ENCODE measurements at regions of chr5 and their contacts with region 1.

Region 1: GRCh38 chr5:119411935-119412602 is 40.2 kb upstream of the HSD17B4 start:
- DNase-seq: peak; percentile 77
- H3K4me3 Mint-ChIP-seq: peak overlapping the region; percentile 72
- H3K27ac Mint-ChIP-seq: peak overlapping the region; percentile 77
- H3K4me1 Mint-ChIP-seq: peaks cover 36% of the 10 kb centered on the region
- H3K27me3 Mint-ChIP-seq: no peaks in the 10 kb centered on the region

Region 2: GRCh38 chr5:118987988-118988865 is 423.8 kb before region 1 on chr5 and contains the start of gene DTWD2:
- CTCF ChIA-PET with region 1: interaction called, 83 read pairs
- intact Hi-C with region 1: loop called (anchors 1 kb)
- DNase-seq: peak; percentile 92
- H3K4me3 Mint-ChIP-seq: peak within 1 kb of the TSS; percentile 76
- H3K27ac Mint-ChIP-seq: peak within 1 kb of the TSS; percentile 63
- H3K4me1 Mint-ChIP-seq: peaks cover 22% of the 10 kb centered on the region
- H3K27me3 Mint-ChIP-seq: no peaks in the 10 kb centered on the region
- total RNA-seq, gene DTWD2: 4.0 to 5.5 TPM

Region 3: GRCh38 chr5:119070828-119071572 is 341.1 kb before region 1 on chr5 and contains the start of gene DMXL1:
- CTCF ChIA-PET with region 1: interaction called, 7 read pairs
- intact Hi-C with region 1: loop called (anchors 2 kb)
- DNase-seq: peak; percentile 100
- H3K4me3 Mint-ChIP-seq: peak within 1 kb of the TSS; percentile 95
- H3K27ac Mint-ChIP-seq: peak within 1 kb of the TSS; percentile 97
- H3K4me1 Mint-ChIP-seq: peaks cover 38% of the 10 kb centered on the region
- H3K27me3 Mint-ChIP-seq: peaks cover 2% of the 10 kb centered on the region
- total RNA-seq, gene DMXL1: 16.4 to 18.0 TPM

Region 4: GRCh38 chr5:119290161-119290569 is 121.9 kb before region 1 on chr5:
- CTCF ChIA-PET with region 1: interaction called, 11 read pairs
- intact Hi-C with region 1: no loop called
- DNase-seq: peak; percentile 44
- H3K4me3 Mint-ChIP-seq: peak overlapping the region; percentile 19
- H3K27ac Mint-ChIP-seq: peak overlapping the region; percentile 90
- H3K4me1 Mint-ChIP-seq: peaks cover 83% of the 10 kb centered on the region
- H3K27me3 Mint-ChIP-seq: no peaks in the 10 kb centered on the region

Region 5: DNA sequence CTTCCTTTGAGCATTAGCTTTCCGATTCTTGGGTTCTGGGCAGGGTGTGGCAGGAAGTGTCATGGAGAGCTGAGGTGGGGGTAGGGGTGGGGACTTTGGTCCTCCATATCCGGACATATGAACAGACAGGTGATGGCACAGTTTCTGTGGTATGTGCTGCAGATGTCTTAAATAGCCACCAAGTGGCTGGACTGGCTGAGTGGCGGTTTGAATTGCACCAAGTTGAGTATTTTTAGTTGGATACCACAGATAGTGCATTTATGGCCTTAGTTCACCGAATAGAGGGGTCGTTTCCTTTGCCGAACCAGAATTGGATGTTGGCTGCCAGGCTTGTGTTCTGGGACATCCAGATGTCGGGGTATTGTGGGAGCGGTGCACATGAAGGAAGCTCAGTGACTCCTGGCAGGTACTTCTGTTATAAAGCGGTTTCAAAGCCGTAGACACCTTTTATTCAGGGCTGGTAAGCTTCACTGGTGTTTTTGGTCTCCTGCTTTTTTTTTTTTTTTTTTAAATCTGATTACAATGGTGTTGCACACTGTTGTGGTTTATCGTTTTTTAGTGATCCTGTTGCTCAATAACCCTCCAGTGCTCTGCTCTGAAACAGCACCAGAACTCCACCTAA is 71.4 kb before region 1 on chr5:
- CTCF ChIA-PET with region 1: interaction called, 54 read pairs
- intact Hi-C with region 1: no loop called
- DNase-seq: peak; percentile 68
- H3K4me3 Mint-ChIP-seq: peak overlapping the region; percentile 69
- H3K27ac Mint-ChIP-seq: peak overlapping the region; percentile 96
- H3K4me1 Mint-ChIP-seq: peaks cover 93% of the 10 kb centered on the region
- H3K27me3 Mint-ChIP-seq: no peaks in the 10 kb centered on the region

Region 6: DNA sequence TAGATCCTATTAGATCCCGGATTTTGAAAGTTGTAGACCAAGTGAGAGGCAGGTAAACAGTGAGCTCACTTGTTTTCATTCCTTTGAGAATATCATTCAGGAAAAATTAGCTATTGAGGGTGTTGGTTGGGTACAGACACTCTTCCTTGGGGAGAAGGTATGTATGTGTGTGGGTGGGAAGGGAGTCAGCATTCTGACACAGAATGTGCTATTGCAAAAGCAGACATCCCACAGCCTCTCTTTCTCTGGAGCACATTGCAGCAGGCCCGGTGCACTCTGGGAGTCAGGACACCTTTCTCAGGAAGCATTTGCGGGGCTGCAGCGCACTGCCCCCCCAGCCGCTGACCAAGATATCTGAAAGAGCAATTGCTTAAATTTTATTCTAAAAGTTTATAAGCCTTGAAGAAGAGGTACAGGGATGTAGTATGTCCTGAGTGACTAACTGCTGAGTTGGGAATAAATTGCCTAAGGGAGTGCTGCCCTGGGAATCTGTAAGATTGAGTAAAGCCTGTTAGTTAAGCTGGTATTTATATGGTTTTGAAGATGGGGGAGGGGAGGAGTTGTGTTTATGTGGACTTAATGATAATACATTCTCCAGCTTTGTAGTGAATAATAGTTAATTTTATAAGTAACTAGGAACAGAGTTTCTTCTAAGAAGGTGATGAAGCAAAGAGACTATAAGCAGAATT is 51.0 kb before region 1 on chr5:
- CTCF ChIA-PET with region 1: interaction called, 12 read pairs
- intact Hi-C with region 1: no loop called
- DNase-seq: no peak
- H3K4me3 Mint-ChIP-seq: peak overlapping the region; percentile 98
- H3K27ac Mint-ChIP-seq: peak overlapping the region; percentile 98
- H3K4me1 Mint-ChIP-seq: peaks cover 83% of the 10 kb centered on the region
- H3K27me3 Mint-ChIP-seq: no peaks in the 10 kb centered on the region

Region 7: GRCh38 chr5:119435436-119436132 is 23.5 kb after region 1 on chr5:
- CTCF ChIA-PET with region 1: interaction called, 25 read pairs
- intact Hi-C with region 1: no loop called
- DNase-seq: peak; percentile 85
- H3K4me3 Mint-ChIP-seq: no peak overlapping the region
- H3K27ac Mint-ChIP-seq: no peak overlapping the region
- H3K4me1 Mint-ChIP-seq: peaks cover 8% of the 10 kb centered on the region
- H3K27me3 Mint-ChIP-seq: peaks cover 7% of the 10 kb centered on the region

Measured in activated naive CD4-positive, alpha-beta T cell treated with anti-CD3 and anti-CD28 coated beads for 36 hours (primary cell).